A549 (cell line): ENCODE measurements at regions of chr2 and their contacts with region 1.

Region 1: DNA sequence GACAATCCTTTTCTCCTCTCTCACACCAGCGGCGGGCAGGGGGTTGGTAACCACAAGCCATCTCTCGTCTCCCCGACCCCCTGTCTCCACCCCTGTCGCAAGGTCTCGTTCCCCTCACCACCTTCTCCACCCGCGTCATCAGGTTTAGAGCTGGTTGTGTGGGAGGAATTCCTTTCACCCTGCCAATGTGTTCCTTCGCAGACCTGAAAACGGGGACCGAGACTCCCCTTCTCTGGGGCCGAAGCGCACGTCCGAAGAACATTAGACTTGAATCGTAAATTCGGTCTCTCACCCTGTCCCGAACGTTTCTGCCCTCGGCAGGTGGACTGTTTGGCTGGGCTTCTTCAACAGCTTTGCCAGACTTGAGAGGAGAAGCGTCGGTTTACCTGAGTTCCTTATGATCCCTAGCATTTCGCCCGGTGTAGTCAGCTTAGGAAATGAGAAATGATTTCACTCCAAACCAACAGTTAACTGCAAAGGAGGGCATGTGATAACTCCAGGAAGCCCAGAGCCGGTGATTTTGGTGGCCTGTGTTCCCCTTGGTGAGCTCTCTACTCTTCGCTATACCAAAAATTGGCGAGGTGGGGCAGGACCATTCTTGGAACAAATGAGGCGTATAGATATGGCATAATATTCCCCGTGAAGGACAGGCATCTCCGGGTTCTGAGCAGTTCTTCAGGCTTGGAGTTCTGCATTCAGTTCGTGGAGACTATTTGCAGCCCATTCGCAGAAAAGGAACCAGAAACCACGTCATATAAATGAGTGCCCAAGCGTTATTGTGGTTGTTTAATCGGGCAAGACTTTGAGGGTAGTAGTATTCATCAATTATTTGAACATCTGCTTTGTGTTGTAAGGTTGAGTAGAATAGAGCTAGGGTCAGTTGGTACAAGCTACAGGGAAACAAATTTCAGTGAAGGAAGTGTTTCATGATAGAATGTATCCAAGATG is 694 bp downstream of the CFAP36 start:
- DNase-seq: peak; percentile 19 to 25
- ATAC-seq: peak; percentile 52 to 69
- H3K4me3 ChIP-seq: peak overlapping the region; percentile 75
- H3K27ac ChIP-seq: peak overlapping the region; percentile 69 to 86
- H3K4me1 ChIP-seq: peaks cover 12% of the 10 kb centered on the region; the same call in 1 of the 3 replicates
- CTCF ChIP-seq: no peak
- EP300 ChIP-seq: no peak
- POLR2A ChIP-seq: no peak
- RAD21 ChIP-seq: no peak

Region 2: GRCh38 chr2:55395724-55396605 is 124.2 kb before region 1 on chr2:
- CTCF ChIA-PET with region 1: no interaction called
- POLR2A ChIA-PET with region 1: no interaction called
- DNase-seq: no peak
- ATAC-seq: no peak
- H3K4me3 ChIP-seq: no peak overlapping the region
- H3K27ac ChIP-seq: no peak overlapping the region
- H3K4me1 ChIP-seq: peaks cover 13% of the 10 kb centered on the region; the same call in 2 of the 3 replicates
- CTCF ChIP-seq: no peak
- EP300 ChIP-seq: no peak
- POLR2A ChIP-seq: no peak
- RAD21 ChIP-seq: no peak

Region 3: DNA sequence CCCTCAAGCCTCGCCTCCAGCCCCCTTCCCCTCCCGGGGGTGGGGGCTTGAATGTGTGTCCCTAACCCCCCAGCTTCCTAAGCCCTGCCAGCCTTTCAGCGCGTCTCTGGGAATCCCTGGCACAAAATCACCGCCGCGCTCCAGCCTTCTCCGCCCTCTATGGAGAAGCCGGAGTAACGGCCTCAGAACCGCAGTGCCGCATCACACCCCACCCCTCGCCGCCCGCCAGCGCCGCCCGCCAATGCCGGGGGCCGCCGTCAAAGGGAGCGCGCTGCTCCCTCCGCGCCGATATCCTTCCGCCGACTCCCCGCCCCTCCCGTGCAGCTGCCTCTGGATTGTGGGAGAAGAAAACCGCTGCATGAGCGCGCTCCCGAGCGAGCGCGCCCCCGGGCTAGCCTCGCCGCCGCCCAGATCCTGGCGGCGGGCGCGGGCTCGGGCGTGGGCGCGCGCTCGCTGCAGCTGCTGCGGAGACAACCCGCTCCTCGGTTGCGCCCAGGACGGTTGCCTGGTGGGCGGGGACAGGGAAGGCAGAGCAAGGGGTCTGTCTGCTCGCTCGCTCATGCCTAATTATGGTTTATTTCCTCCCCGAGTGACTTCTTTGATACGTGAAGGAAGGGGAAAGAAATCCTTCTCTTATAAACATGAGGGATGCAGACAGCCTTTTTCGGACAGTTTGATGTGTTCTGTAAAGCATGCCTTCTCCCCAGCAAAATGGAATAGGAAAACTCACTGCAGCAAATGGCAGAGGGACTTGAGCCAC is 100.4 kb before region 1 on chr2 and contains the start of gene CCDC88A:
- CTCF ChIA-PET with region 1: interaction called, 6 read pairs
- POLR2A ChIA-PET with region 1: interaction called, 18 read pairs
- DNase-seq: peak; percentile 85 to 99
- ATAC-seq: peak; percentile 88 to 94
- H3K4me3 ChIP-seq: peak within 1 kb of the TSS; percentile 70
- H3K27ac ChIP-seq: peak within 1 kb of the TSS; percentile 92 to 99
- H3K4me1 ChIP-seq: peaks cover 42% of the 10 kb centered on the region
- CTCF ChIP-seq: no peak; the same call in 2 of the 3 replicates
- EP300 ChIP-seq: no peak
- POLR2A ChIP-seq: peak; percentile 94
- RAD21 ChIP-seq: peak; percentile 0 to 55; a peak in 3 of 5 replicates
- polyA plus RNA-seq, gene CCDC88A: 70.9 and 77.8 TPM in 2 replicates

Region 4: DNA sequence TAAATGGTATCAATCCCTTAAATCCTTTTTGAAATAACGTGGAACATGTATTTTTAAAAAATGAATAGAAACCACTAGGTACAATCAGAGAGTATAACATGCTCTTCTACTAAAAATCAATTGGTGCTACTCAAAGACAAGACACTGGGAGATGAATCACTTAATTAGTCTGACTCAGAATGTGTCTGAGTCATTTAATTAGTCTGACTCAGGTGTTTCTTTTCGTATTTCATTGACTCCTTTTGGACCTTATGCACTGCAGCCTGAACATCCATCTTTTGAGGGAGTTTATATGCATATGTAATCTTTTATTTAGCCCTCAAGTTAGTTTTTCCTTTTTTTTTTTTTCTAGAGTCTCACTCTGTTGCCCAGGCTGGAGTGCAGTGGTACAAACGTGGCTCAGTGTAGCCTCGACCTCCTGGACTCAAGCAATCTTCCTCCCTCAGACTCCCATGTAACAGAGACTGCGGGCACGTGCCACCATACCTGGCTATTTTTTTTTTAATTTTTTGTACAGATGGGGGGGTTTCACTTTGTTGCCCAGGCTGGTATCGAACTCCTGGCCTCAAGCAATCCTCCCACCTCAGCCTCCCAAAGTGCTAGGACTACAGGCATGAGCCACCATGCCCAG is 70.7 kb after region 1 on chr2:
- CTCF ChIA-PET with region 1: no interaction called
- POLR2A ChIA-PET with region 1: no interaction called
- DNase-seq: peak; percentile 14 to 24
- ATAC-seq: no peak; a peak in 2 of 6 replicates
- H3K4me3 ChIP-seq: no peak overlapping the region
- H3K27ac ChIP-seq: peak overlapping the region in 1 of 2 experiments; percentile 36; a peak in 2 of 6 replicates
- H3K4me1 ChIP-seq: peaks cover 21% of the 10 kb centered on the region; the same call in 2 of the 3 replicates
- CTCF ChIP-seq: no peak
- EP300 ChIP-seq: no peak
- POLR2A ChIP-seq: no peak
- RAD21 ChIP-seq: no peak

Region 5: DNA sequence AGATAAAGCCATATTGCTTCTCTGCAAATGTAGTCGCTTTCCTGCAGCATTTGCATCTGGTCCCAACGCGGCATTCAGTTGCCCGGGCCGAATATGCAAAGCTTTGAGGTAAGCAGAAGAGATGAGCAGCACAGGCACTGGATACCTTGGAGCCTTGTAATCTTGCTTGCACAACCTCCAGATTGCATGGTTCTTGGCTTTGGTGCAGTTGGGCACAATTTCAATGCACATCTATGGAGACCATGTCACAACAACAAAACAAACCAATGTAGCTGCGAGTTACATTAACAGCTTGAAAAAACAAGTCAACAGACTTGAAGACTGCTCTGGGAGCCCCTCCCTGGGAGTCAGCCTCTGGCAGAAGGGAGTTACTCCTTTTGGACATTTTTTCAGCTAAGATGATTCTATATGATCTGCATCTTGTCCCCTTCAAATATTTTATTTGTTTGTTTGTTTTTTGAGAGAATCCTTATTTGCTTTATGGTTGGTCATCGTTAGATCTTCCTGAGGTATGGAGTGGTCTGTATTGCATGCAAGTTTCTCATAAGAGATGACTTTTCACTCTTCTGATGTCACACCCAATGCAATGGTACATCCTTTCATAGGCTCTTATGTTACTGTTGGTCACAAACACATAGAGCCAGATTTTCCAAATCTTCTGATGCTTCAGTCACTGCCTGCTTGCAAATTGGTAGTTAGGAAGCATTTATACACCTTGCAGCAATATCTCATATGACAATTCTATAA is 289.8 kb after region 1 on chr2:
- CTCF ChIA-PET with region 1: no interaction called
- POLR2A ChIA-PET with region 1: no interaction called
- DNase-seq: peak in 1 of 2 experiments; percentile 73
- ATAC-seq: peak; percentile 87
- H3K4me3 ChIP-seq: no peak overlapping the region
- H3K27ac ChIP-seq: peak overlapping the region; percentile 11 to 20; a peak in 3 of 6 replicates
- H3K4me1 ChIP-seq: peaks cover 18% of the 10 kb centered on the region
- CTCF ChIP-seq: no peak
- EP300 ChIP-seq: no peak
- POLR2A ChIP-seq: no peak
- RAD21 ChIP-seq: no peak